BJ (cell line): ENCODE measurements at regions of chr2 and their contacts with region 1.

Region 1: DNA sequence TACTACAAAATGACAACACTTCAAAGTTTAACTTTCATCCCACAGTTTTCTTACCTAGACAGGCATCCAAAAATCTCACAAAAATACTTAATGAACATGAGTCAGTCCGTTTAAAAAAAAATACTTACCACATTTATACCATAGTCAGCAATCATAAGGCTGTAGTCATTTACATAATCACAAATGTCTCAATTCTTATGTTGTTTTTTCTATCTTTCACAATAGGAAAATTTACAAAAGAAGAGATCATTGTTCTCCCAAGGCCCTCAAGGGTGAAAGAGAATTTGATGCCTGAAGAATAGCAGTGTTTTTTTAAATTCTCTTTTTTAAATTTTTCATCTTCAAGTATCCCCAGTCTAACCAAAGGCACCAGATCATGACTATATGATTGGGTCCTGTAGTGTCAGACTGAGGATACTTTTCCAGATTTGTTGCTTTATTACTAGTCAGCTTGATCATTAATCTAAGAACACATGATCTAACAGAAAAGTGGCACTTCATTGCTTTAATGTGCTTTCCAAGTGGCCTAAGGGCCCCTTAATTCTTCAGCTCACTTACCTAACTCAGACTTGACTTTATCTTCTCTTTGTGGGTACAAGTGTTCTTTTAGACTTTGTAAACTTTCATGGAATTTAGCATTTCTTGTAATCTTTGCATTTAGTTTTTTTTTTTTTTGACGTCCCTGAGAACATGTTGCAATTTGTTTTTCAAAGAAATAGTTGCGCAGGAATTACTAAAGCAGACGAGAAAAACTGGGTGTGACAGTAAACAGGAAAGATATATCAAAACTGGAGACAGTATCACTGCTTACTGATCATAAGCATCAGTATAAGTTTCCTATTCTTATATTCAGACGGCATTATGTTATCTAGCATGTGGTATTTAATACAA is 4.8 kb downstream of the SCYGR5 start:
- DNase-seq: no peak
- H3K4me3 ChIP-seq: no peak overlapping the region
- H3K27me3 ChIP-seq: no peaks in the 10 kb centered on the region; the same call in 1 of the 2 replicates
- CTCF ChIP-seq: no peak

Region 2: GRCh38 chr2:227657199-227657845 is 14.1 kb before region 1 on chr2:
- CTCF ChIA-PET with region 1: interaction called, 11 read pairs
- POLR2A ChIA-PET with region 1: no interaction called
- DNase-seq: no peak
- H3K4me3 ChIP-seq: no peak overlapping the region
- H3K27me3 ChIP-seq: no peaks in the 10 kb centered on the region
- CTCF ChIP-seq: no peak

Region 3: DNA sequence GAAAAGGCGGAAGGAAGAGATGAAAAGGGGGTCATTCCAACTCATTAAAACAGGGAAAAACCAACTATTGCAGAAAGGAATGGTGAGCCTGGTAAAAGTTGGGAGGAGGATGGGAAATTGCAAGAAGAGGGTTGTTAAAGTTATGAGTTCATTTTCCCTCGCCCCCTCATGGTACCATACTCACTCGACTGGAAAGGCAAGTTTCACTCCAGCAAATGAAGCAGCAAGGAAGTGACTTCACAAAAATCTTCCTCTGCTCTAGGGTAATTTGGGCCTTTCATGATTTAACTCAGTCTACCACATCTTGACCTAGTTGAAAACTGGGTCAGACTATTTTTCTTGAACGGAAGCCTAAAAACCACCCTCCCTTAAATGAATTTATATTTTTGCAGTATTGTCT is 177.2 kb after region 1 on chr2:
- CTCF ChIA-PET with region 1: no interaction called
- POLR2A ChIA-PET with region 1: no interaction called
- DNase-seq: no peak
- H3K4me3 ChIP-seq: no peak overlapping the region
- H3K27me3 ChIP-seq: no peaks in the 10 kb centered on the region
- CTCF ChIP-seq: no peak